GM18951 (cell line): ENCODE measurements at regions of chr11 and their contacts with region 1.

Region 1: GRCh38 chr11:125345421-125346178 is 150.5 kb downstream of the FEZ1 start:
- POLR2A ChIP-seq: no peak

Region 2: GRCh38 chr11:124953753-124954589 is 391.6 kb before region 1 on chr11 and contains the start of gene CCDC15:
- in situ Hi-C with region 1: loop called (anchors 25 kb)
- POLR2A ChIP-seq: peak; percentile 97

Region 3: GRCh38 chr11:125053167-125053566 is 292.4 kb before region 1 on chr11:
- in situ Hi-C with region 1: no loop called
- POLR2A ChIP-seq: no peak